IMR-90 (cell line): ENCODE measurements at regions of chr5 and their contacts with region 1.

Region 1: GRCh38 chr5:39399135-39400036 is 25.4 kb downstream of the DAB2 start:
- DNase-seq: peak; percentile 98
- ATAC-seq: peak; percentile 71
- H3K4me3 ChIP-seq: no peak overlapping the region
- H3K27ac ChIP-seq: peak overlapping the region; percentile 75; the same call in 1 of the 2 replicates
- H3K4me1 ChIP-seq: peaks cover 38% of the 10 kb centered on the region
- H3K27me3 ChIP-seq: no peaks in the 10 kb centered on the region
- CTCF ChIP-seq: no peak
- POLR2A ChIP-seq: no peak
- RAD21 ChIP-seq: 0 out of 2 replicates have a peak, but pooled peaks have one; percentile 7

Region 2: GRCh38 chr5:39121315-39121714 is 278.1 kb before region 1 on chr5:
- CTCF ChIA-PET with region 1: no interaction called
- POLR2A ChIA-PET with region 1: no interaction called
- dilution Hi-C with region 1: no loop called
- in situ Hi-C with region 1: no loop called
- intact Hi-C with region 1: no loop called
- DNase-seq: peak; percentile 28
- ATAC-seq: no peak; the same call in 1 of the 2 replicates
- H3K4me3 ChIP-seq: no peak overlapping the region
- H3K27ac ChIP-seq: no peak overlapping the region
- H3K4me1 ChIP-seq: peaks cover 3% of the 10 kb centered on the region; the same call in 1 of the 2 replicates
- H3K27me3 ChIP-seq: no peaks in the 10 kb centered on the region
- CTCF ChIP-seq: no peak
- POLR2A ChIP-seq: no peak
- RAD21 ChIP-seq: no peak

Region 3: DNA sequence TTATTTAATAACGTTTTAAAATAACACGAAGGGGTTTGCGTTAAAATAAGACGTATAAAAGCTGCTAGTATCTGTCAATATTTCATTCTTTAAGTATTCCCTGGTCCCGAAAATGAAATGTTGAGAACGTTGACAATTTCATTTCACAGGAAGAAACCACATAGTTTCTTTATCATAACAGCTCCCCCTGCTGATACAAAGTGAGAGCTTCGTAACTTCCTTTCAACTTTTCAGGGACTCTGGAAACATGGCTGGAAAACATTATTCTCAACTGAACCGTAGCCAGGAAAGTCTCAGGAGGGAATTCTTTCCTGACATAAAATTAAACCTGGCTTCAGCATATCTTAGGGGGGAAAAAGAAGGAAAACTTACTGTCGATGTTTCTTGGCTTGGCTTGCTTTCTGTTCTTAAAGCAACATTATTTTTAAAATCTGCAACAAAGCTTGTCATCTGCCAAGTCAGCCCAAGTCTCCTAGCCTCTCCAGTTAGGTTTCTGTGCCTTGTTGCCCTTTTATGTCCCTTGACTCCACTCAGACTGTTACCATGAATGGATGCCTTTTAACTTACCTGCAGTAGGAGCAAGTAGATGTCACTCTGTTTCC is 148.3 kb after region 1 on chr5:
- CTCF ChIA-PET with region 1: interaction called, 4 read pairs
- POLR2A ChIA-PET with region 1: no interaction called
- dilution Hi-C with region 1: no loop called
- in situ Hi-C with region 1: no loop called
- intact Hi-C with region 1: loop called (anchors 5 kb)
- DNase-seq: peak; percentile 68
- ATAC-seq: peak; percentile 86
- H3K4me3 ChIP-seq: no peak overlapping the region
- H3K27ac ChIP-seq: no peak overlapping the region
- H3K4me1 ChIP-seq: peaks cover 1% of the 10 kb centered on the region; the same call in 1 of the 2 replicates
- H3K27me3 ChIP-seq: no peaks in the 10 kb centered on the region; the same call in 1 of the 2 replicates
- CTCF ChIP-seq: peak; percentile 81
- POLR2A ChIP-seq: no peak
- RAD21 ChIP-seq: peak; percentile 82